Sciatic nerve (tissue), 2 donors: ENCODE measurements at regions of chr3 and their contacts with region 1.

Region 1: GRCh38 chr3:189961525-189962161 is 159.1 kb downstream of the P3H2 start:
- DNase-seq: peak; percentile 88
- ATAC-seq: peak; percentile 86

Region 2: GRCh38 chr3:190197346-190197763 is 235.7 kb after region 1 on chr3:
- intact Hi-C with region 1: loop called (anchors 5 kb)
- DNase-seq: no peak
- ATAC-seq: no peak

Region 3: GRCh38 chr3:190321789-190322603 is 360.4 kb after region 1 on chr3 and contains the start of gene CLDN1:
- intact Hi-C with region 1: loop called (anchors 10 kb)
- DNase-seq: peak; percentile 93
- ATAC-seq: peak; percentile 91
- total RNA-seq, gene CLDN1: 130 TPM